Endothelial cell of umbilical vein (primary cell): ENCODE measurements at regions of chr11 and their contacts with region 1.

Region 1: GRCh38 chr11:80727315-80728230 is 1286.7 kb upstream of the TENM4 start:
- DNase-seq: no peak
- H3K4me3 ChIP-seq: no peak overlapping the region
- H3K27ac ChIP-seq: no peak overlapping the region
- H3K4me1 ChIP-seq: peaks cover 14% of the 10 kb centered on the region
- H3K27me3 ChIP-seq: no peaks in the 10 kb centered on the region
- CTCF ChIP-seq: peak in 1 of 2 donors; percentile 20
- POLR2A ChIP-seq: no peak

Region 2: DNA sequence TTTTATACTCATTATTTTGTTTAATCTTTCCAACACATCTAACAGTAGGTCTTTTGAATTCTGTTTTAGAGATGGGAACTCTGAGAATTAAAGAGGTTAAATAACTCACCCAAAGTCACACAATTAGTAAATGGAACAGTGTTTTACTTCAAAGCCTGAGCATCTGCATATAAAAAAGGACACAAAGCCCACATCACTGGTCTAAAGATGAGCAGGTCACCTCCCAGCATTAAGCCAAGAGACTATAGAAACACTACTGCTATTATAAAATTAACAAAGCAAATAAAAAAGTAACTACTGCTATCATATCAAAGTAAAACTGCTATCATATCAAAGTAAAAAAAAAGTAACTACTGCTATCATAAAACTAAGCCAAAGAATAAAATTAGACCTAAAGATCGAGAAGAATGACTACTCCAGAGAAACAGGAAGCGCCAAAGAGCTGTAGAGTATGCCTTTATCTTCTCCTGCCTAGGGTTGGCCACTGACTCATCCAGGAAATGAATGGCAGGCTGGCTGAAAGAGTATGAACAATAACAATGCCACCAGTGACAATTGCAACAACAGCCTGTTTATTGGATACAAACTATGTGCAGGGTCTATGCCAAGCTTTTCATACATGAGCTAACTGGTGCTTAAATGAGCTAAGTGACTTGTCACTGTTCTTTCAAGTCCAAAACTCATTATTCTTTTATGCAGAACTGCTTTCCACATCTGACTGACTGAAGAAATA is 133.8 kb before region 1 on chr11:
- CTCF ChIA-PET with region 1: no interaction called
- POLR2A ChIA-PET with region 1: no interaction called
- dilution Hi-C with region 1: no loop called
- intact Hi-C with region 1: loop called (anchors 10 kb)
- DNase-seq: peak; percentile 97
- H3K4me3 ChIP-seq: no peak overlapping the region
- H3K27ac ChIP-seq: peak overlapping the region; percentile 90
- H3K4me1 ChIP-seq: peaks cover 28% of the 10 kb centered on the region
- H3K27me3 ChIP-seq: no peaks in the 10 kb centered on the region
- CTCF ChIP-seq: no peak
- POLR2A ChIP-seq: peak; percentile 70

Region 3: GRCh38 chr11:80668039-80668438 is 59.5 kb before region 1 on chr11:
- CTCF ChIA-PET with region 1: no interaction called
- POLR2A ChIA-PET with region 1: no interaction called
- dilution Hi-C with region 1: no loop called
- intact Hi-C with region 1: no loop called
- DNase-seq: no peak
- H3K4me3 ChIP-seq: no peak overlapping the region
- H3K27ac ChIP-seq: no peak overlapping the region
- H3K4me1 ChIP-seq: no peaks in the 10 kb centered on the region
- H3K27me3 ChIP-seq: no peaks in the 10 kb centered on the region
- CTCF ChIP-seq: no peak
- POLR2A ChIP-seq: no peak

Region 4: DNA sequence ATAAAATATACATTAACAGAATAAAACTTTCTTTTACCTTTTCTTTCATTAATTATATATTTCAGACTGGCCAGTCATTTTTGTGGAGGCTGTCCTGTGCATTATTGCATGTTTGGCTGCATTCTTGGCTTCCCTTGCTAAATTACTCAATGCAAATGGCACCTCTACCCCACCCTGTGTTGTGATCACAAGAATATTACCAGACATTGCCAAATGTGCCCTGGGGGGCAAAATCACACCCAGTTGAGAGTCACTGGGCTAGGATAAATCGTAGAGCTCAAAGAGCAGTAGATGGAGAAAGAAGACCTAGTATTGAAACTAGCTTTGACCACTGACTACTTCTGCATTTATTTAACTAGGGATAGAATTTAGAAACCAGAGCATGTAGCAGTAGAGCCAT is 28.9 kb before region 1 on chr11:
- CTCF ChIA-PET with region 1: no interaction called
- POLR2A ChIA-PET with region 1: no interaction called
- dilution Hi-C with region 1: no loop called
- intact Hi-C with region 1: loop called (anchors 1 kb)
- DNase-seq: no peak
- H3K4me3 ChIP-seq: no peak overlapping the region
- H3K27ac ChIP-seq: peak overlapping the region; percentile 84
- H3K4me1 ChIP-seq: peaks cover 16% of the 10 kb centered on the region
- H3K27me3 ChIP-seq: no peaks in the 10 kb centered on the region
- CTCF ChIP-seq: no peak
- POLR2A ChIP-seq: no peak

Region 5: GRCh38 chr11:81005595-81005994 is 278.0 kb after region 1 on chr11:
- CTCF ChIA-PET with region 1: interaction called, 3 read pairs
- POLR2A ChIA-PET with region 1: no interaction called
- dilution Hi-C with region 1: no loop called
- intact Hi-C with region 1: loop called (anchors 10 kb)
- DNase-seq: peak; percentile 43
- H3K4me3 ChIP-seq: no peak overlapping the region
- H3K27ac ChIP-seq: no peak overlapping the region
- H3K4me1 ChIP-seq: peaks cover 5% of the 10 kb centered on the region
- H3K27me3 ChIP-seq: no peaks in the 10 kb centered on the region
- CTCF ChIP-seq: no peak
- POLR2A ChIP-seq: no peak